Pancreas (tissue), 10 donors: ENCODE measurements at regions of chr6 and their contacts with region 1.

Region 1: DNA sequence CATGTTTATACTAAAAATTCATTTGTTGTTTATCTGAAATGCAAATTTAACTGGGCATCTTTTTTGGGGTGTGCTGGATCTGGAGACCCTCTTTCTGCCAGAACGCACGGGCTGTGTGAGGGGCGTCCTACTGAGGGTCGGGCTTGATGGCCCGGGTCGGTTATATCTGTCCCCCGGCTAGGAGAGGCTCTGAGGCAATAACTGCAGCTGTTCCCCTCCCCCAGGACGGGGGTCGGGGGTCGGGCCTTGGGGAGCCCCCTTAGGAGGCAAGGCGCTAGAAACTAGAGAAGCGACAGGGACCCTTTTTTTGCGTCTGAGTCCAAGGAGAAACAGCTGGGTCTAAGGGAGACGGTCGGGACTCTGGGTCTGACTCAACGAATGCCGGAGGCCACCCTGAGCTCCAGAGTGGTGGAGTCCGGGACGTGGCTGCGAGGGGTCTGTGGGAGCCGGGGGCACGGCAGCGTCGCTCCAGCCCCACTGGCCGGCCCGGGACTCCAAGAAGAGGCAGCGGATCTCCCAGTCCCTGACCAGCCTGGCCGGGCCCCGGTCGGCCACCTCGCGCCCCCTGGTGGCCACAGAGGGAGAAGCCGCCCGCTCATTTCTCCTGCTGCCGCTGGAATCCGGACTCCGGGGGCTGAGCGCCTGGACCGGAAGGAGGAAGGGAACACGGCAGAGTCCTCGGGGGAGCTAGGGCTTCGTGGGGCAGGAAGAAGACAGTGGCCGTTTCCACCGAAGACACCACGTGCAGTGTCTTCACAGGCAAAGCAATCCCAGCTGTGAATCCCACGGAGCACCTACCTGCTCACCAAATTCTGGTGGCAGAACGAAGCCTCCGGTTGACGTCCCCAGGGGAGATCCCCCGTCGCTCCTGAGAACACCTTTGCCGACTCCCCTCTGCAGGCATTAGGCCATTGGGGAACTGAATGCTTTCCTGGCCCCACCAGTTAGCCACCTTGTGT is 24.0 kb upstream of the SCML4 start:
- DNase-seq: peak; percentile 81 to 99 (median 92)
- ATAC-seq: peak; percentile 97 to 100 (median 99)
- H3K4me3 ChIP-seq: peak overlapping the region in 3 of 4 donors; percentile 31 to 47 (median 46)
- H3K27ac ChIP-seq: no peak overlapping the region
- H3K4me1 ChIP-seq: peaks cover 0 to 5% (median 0%) of the 10 kb centered on the region in 3 donors
- H3K27me3 ChIP-seq: no peaks in the 10 kb centered on the region
- CTCF ChIP-seq: peak; percentile 93 to 96 (median 94)

Region 2: DNA sequence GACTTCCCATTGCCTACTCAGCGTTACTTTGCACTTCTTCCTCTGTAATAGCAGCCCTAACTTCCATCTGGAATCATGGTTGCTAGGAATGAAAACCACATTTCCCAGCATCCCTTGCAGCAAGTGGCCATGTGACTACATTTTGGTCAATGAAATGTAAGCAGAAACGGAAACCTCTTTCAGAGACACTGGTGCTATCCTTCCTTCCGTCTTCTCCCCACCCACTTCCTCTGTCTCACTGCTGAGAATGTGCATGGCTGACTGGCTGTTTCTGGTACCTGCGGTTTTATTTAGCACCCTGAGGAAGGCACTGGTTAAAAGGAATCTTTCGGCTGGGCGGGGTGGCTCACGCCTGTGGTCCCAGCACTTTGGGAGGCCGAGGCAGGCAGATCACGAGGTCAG is 131.4 kb before region 1 on chr6:
- intact Hi-C with region 1: no loop called
- DNase-seq: no peak
- ATAC-seq: peak in 1 of 4 donors; percentile 52
- H3K4me3 ChIP-seq: no peak overlapping the region
- H3K27ac ChIP-seq: no peak overlapping the region
- H3K4me1 ChIP-seq: no peaks in the 10 kb centered on the region
- H3K27me3 ChIP-seq: no peaks in the 10 kb centered on the region
- CTCF ChIP-seq: no peak

Region 3: GRCh38 chr6:107800564-107801164 is 47.5 kb before region 1 on chr6:
- intact Hi-C with region 1: loop called in 2 of 3 experiments (anchors 5 kb)
- DNase-seq: no peak
- ATAC-seq: peak in 3 of 4 donors; percentile 86 to 88 (median 87)
- H3K4me3 ChIP-seq: no peak overlapping the region
- H3K27ac ChIP-seq: no peak overlapping the region
- H3K4me1 ChIP-seq: peaks cover 0 to 5% (median 0%) of the 10 kb centered on the region in 3 donors
- H3K27me3 ChIP-seq: no peaks in the 10 kb centered on the region
- CTCF ChIP-seq: peak in 3 of 4 donors; percentile 27 to 33 (median 29)

Region 4: GRCh38 chr6:107806691-107807090 is 41.4 kb before region 1 on chr6:
- intact Hi-C with region 1: loop called in 2 of 3 experiments (anchors 5 kb)
- DNase-seq: peak in 2 of 6 donors; percentile 19 to 22
- ATAC-seq: peak in 3 of 4 donors; percentile 26 to 66 (median 57)
- H3K4me3 ChIP-seq: no peak overlapping the region
- H3K27ac ChIP-seq: no peak overlapping the region
- H3K4me1 ChIP-seq: no peaks in the 10 kb centered on the region
- H3K27me3 ChIP-seq: no peaks in the 10 kb centered on the region
- CTCF ChIP-seq: no peak